ENCODE measurements at regions of chr2 and their contacts with region 1.

Region 1: DNA sequence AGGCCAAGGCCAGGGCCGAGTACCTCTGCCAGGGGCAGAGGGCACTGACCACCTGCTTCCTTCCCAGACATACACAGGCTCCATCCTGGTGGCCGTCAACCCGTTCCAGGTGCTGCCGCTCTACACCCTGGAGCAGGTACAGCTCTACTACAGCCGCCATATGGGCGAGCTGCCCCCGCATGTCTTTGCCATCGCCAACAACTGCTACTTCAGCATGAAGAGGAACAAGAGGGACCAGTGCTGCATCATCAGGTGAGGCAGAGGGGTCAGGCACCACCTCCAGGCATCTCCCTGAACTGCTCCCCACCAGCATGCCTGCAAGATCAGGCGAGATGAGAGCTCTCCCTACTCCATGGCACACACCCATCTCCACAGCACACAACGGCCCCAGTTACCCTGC is 31.1 kb downstream of the MYO7B start:
- DNase-seq: no peak
- H3K4me3 ChIP-seq: no peak overlapping the region
- H3K27ac ChIP-seq: no peak overlapping the region
- H3K4me1 ChIP-seq: no peaks in the 10 kb centered on the region
- H3K27me3 ChIP-seq: no peaks in the 10 kb centered on the region
- CTCF ChIP-seq: no peak
- POLR2A ChIP-seq: no peak

Region 2: DNA sequence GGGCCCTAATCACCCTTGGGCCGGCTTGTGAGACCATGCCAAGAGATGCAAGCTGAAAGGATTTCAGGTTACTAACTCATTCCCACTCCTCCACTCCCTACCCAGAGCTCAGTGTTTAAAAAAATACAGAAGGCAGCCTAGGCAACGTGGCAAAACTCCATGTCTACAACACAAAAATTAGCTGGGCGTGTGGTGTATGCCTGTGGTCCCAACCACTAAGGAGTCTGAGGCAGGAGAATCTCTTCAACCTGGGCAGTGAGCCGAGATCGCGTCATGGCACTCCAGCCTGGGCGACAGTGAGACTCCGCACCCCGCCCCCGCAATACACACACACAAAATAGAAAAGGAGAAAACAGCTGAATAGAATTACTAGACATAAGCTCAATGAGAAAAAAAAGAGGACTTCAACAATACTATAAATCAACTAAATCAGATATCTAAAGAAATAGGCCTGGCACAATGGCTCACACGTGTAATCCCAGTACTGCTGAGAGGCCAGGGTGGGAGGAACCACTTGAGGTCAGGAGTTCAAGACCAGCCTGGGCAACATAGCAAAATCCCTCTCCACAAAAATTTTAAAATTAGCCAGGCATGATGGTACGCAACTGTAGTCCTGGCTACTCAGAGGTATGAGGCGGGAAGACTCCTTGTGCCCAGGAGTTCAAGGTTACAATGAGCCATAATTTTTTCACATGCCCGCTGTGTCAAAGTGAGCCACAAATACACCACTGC is 50.4 kb before region 1 on chr2:
- intact Hi-C with region 1: loop called (anchors 2 kb)
- DNase-seq: peak in 1 of 2 donors; percentile 56
- H3K4me3 ChIP-seq: peak overlapping the region in 1 of 3 donors; percentile 13
- H3K27ac ChIP-seq: peak overlapping the region; percentile 56 to 82
- H3K4me1 ChIP-seq: peaks cover 3 to 7% of the 10 kb centered on the region in 2 donors
- H3K27me3 ChIP-seq: no peaks in the 10 kb centered on the region
- CTCF ChIP-seq: no peak
- POLR2A ChIP-seq: no peak